ENCODE measurements at regions of chr13 and their contacts with region 1.

Region 1: GRCh38 chr13:41613984-41614661 is 156.8 kb downstream of the RGCC start:
- DNase-seq: peak in 1 of 2 experiments; percentile 16
- H3K4me3 ChIP-seq: no peak overlapping the region
- H3K27ac ChIP-seq: peak overlapping the region; percentile 45
- H3K4me1 ChIP-seq: peaks cover 47% of the 10 kb centered on the region
- H3K27me3 ChIP-seq: no peaks in the 10 kb centered on the region
- CTCF ChIP-seq: no peak

Region 2: GRCh38 chr13:41456768-41457588 is 157.1 kb before region 1 on chr13 and contains the start of gene RGCC:
- CTCF ChIA-PET with region 1: interaction called, 7 read pairs
- POLR2A ChIA-PET with region 1: interaction called, 3 read pairs
- intact Hi-C with region 1: loop called (anchors 2 kb)
- DNase-seq: peak; percentile 46 to 77
- H3K4me3 ChIP-seq: peak within 1 kb of the TSS; percentile 62
- H3K27ac ChIP-seq: no peak within 1 kb of the TSS
- H3K4me1 ChIP-seq: 0 out of 2 replicates have a peak, but pooled peaks cover 5% of the 10 kb centered on the region
- H3K27me3 ChIP-seq: peaks cover 14% of the 10 kb centered on the region; the same call in 1 of the 2 replicates
- CTCF ChIP-seq: no peak
- total RNA-seq, gene RGCC: 3.4 and 4.8 TPM in 2 replicates

Region 3: GRCh38 chr13:41546372-41547190 is 67.5 kb before region 1 on chr13:
- CTCF ChIA-PET with region 1: no interaction called
- POLR2A ChIA-PET with region 1: no interaction called
- intact Hi-C with region 1: loop called (anchors 10 kb)
- DNase-seq: peak in 1 of 2 experiments; percentile 16
- H3K4me3 ChIP-seq: no peak overlapping the region
- H3K27ac ChIP-seq: no peak overlapping the region
- H3K4me1 ChIP-seq: no peaks in the 10 kb centered on the region
- H3K27me3 ChIP-seq: no peaks in the 10 kb centered on the region
- CTCF ChIP-seq: no peak